Mucosa of descending colon (tissue), 3 donors: ENCODE measurements at regions of chr3 and their contacts with region 1.

Region 1: DNA sequence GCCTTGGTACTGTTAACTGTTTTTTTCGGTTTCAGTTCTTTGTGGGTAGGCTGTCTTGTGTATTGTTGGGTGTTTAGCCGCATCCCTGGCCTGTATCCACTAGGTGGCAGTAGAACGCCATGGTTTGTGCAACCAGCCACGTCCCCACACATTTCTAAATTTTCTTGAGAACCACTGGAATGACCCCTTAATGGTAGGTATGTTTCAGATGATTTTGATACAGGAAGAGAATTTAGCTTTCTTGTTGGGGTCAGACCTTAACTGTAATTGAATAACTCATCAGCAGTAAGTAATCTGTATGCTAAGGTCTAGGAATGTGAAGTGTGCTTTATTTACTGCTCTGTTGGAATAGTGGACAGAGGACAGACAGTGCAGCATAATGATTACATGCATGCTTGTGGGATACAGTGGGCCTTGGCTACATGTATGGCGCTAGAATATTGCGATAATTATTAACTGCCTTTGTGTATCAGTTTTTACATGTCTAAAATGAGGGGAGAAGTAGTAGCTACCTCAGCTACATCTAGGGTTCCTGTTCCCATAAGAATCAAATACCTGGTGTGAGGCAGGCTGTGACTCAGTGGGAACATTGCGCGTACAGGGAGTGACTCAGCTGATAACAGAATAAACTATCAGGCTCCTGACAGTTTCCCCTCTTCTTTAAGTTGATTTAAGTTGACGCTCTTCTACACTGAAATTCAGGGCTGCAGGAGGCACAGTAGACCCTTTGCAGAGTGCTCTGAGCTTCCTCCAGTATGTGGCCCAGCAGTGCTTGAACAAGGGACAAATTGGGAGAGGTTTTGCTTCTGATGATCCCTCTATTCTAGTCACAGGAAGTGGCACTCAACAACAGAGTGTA is 25.0 kb upstream of the GPR171 start:
- DNase-seq: peak in 2 of 3 donors; percentile 73 to 85
- ATAC-seq: peak; percentile 94
- H3K4me3 ChIP-seq: no peak overlapping the region
- H3K4me1 ChIP-seq: peaks cover 10% of the 10 kb centered on the region
- CTCF ChIP-seq: peak; percentile 76

Region 2: DNA sequence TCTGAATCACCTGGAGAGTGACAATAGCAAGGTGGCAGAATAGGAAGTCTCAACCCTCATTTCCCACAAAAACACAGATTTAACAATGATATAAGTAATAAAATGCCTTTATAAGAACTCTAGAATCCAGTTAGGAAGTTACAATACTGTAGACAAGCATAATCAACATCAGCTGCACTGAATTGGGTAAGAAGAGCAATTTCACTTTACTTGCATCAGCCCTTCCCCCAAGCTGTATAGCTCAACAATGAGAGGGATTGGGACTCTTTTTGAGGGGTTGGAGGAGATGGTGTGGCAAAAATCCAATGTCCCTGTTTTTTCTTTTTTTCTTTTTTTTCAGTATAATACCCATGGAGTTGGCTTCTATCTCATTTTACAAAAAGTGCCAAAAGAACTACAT is 744.8 kb before region 1 on chr3:
- intact Hi-C with region 1: no loop called
- DNase-seq: no peak
- ATAC-seq: no peak
- H3K4me3 ChIP-seq: no peak overlapping the region
- H3K4me1 ChIP-seq: no peaks in the 10 kb centered on the region
- CTCF ChIP-seq: no peak

Region 3: DNA sequence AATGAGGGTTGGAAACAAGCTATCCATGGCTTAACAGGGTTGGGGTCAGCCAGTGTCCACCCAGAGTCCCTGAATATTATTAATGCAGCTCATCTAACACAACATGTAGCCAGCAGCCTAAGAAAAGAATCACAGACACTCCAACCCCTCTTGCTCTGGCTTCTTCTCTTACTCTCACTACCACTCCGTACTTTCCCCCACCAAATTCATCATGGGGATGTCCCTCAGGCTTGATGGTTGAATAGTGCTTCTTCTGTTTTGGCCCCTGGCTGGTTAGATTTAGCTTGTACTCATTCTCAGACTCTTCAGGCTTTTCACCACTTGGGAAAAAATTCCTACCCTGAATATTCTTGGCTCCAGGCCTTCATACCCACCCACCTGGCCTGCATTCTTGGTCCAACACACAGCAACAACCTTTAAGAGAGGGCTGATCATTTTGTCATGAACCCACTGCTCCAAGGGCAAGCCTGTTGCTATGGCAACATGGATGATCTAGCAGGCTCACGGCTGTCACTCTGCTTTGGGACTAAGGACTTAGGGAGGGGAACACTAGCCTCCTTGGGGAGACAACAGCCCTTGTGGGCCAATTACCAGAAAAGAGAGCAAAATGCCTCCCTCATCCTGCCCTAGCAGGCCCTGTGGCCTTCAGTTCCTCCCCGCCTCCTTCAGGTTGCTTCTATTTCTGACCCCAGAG is 152.0 kb before region 1 on chr3:
- intact Hi-C with region 1: no loop called
- DNase-seq: no peak
- ATAC-seq: no peak
- H3K4me3 ChIP-seq: no peak overlapping the region
- H3K4me1 ChIP-seq: no peaks in the 10 kb centered on the region
- CTCF ChIP-seq: no peak

Region 4: DNA sequence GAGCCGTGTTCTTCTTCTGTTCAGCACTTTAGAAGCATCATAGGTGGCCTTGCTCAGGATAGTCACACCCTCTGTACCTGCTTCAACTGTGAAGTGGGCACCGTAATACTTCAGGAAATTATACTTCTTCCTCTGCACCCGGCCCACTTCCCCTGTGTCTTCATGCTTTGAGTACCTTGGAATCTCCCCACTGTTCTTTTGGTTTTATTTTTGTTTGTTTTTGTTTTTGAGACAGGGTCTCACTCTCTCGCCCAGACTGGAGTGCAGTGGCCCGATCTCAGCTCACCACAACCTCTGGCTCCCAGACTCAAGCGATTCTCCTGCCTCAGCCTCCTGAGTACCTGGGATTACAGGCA is 48.6 kb after region 1 on chr3:
- intact Hi-C with region 1: loop called in 1 of 2 experiments (anchors 5 kb)
- DNase-seq: peak in 1 of 3 donors; percentile 24
- ATAC-seq: peak; percentile 61
- H3K4me3 ChIP-seq: no peak overlapping the region
- H3K4me1 ChIP-seq: peaks cover 3% of the 10 kb centered on the region
- CTCF ChIP-seq: no peak